GM12878 (cell line): ENCODE measurements at regions of chr1 and their contacts with region 1.

Region 1: GRCh38 chr1:67685067-67685557 is at the start of gene GADD45A:
- DNase-seq: peak; percentile 97
- ATAC-seq: peak; percentile 88
- H3K4me3 ChIP-seq: peak within 1 kb of the TSS; percentile 81
- H3K27ac ChIP-seq: peak within 1 kb of the TSS; percentile 83
- H3K4me1 ChIP-seq: peaks cover 8% of the 10 kb centered on the region
- H3K27me3 ChIP-seq: peaks cover 0 to 2% of the 10 kb centered on the region in 2 experiments; a peak in 2 of 4 replicates
- CTCF ChIP-seq: no peak
- EP300 ChIP-seq: 0 out of 4 replicates have a peak, but pooled peaks of 1 of the 2 experiments have one; percentile 36
- POLR2A ChIP-seq: peak; percentile 100
- RAD21 ChIP-seq: no peak
- polyA plus RNA-seq, gene GADD45A: 4.7 to 9.3 TPM

Region 2: GRCh38 chr1:67430352-67431155 is 254.6 kb before region 1 on chr1 and contains the start of gene SERBP1:
- CTCF ChIA-PET with region 1: no interaction called
- POLR2A ChIA-PET with region 1: interaction called, 5 read pairs
- RAD21 ChIA-PET with region 1: no interaction called
- SMC1A ChIA-PET with region 1: no interaction called
- in situ Hi-C with region 1: no loop called
- intact Hi-C with region 1: loop called (anchors 5 kb)
- DNase-seq: peak; percentile 98
- ATAC-seq: peak; percentile 86
- H3K4me3 ChIP-seq: peak within 1 kb of the TSS; percentile 91
- H3K27ac ChIP-seq: peak within 1 kb of the TSS; percentile 96
- H3K4me1 ChIP-seq: peaks cover 15% of the 10 kb centered on the region
- H3K27me3 ChIP-seq: no peaks in the 10 kb centered on the region
- CTCF ChIP-seq: no peak
- EP300 ChIP-seq: peak in 1 of 2 experiments; percentile 50; a peak in 2 of 4 replicates
- POLR2A ChIP-seq: peak; percentile 59
- RAD21 ChIP-seq: no peak
- polyA plus RNA-seq, gene SERBP1: 76.7 to 111 TPM

Region 3: GRCh38 chr1:67561704-67562113 is 123.4 kb before region 1 on chr1:
- CTCF ChIA-PET with region 1: interaction called, 44 read pairs
- POLR2A ChIA-PET with region 1: interaction called, 5 read pairs
- RAD21 ChIA-PET with region 1: interaction called, 18 read pairs
- SMC1A ChIA-PET with region 1: interaction called, 18 read pairs
- in situ Hi-C with region 1: no loop called
- intact Hi-C with region 1: loop called (anchors 1 kb)
- DNase-seq: peak; percentile 24
- ATAC-seq: peak; percentile 94
- H3K4me3 ChIP-seq: no peak overlapping the region
- H3K27ac ChIP-seq: no peak overlapping the region
- H3K4me1 ChIP-seq: no peaks in the 10 kb centered on the region; the same call in 1 of the 2 replicates
- H3K27me3 ChIP-seq: no peaks in the 10 kb centered on the region
- CTCF ChIP-seq: peak; percentile 82 to 88 (median 88)
- EP300 ChIP-seq: no peak
- POLR2A ChIP-seq: no peak
- RAD21 ChIP-seq: peak; percentile 93

Region 4: DNA sequence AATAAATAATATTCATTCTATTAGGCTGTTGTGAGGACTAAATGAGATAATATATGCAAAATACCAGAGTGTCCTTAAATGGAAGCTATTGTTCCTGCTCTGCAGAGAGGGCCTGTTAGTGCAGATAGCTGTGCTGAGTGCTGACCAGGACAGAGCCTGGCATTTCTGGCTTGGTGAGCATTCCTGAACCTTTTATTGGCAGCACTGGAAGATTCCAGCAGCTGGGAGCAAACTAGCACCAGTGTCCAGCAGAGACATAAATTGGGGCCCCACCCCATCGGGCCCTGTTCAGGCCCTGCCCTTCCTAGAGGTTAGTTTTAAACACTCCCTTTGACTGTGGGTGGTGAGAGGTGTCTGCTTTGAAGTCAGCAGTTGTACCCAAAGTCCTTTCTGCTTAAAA is 86.0 kb before region 1 on chr1:
- CTCF ChIA-PET with region 1: no interaction called
- POLR2A ChIA-PET with region 1: no interaction called
- RAD21 ChIA-PET with region 1: no interaction called
- SMC1A ChIA-PET with region 1: no interaction called
- in situ Hi-C with region 1: no loop called
- intact Hi-C with region 1: no loop called
- DNase-seq: no peak
- ATAC-seq: no peak
- H3K4me3 ChIP-seq: no peak overlapping the region
- H3K27ac ChIP-seq: no peak overlapping the region
- H3K4me1 ChIP-seq: no peaks in the 10 kb centered on the region
- H3K27me3 ChIP-seq: no peaks in the 10 kb centered on the region
- CTCF ChIP-seq: no peak
- EP300 ChIP-seq: no peak
- POLR2A ChIP-seq: no peak
- RAD21 ChIP-seq: no peak

Region 5: GRCh38 chr1:67674260-67675011 is 10.7 kb before region 1 on chr1:
- CTCF ChIA-PET with region 1: interaction called, 8 read pairs
- POLR2A ChIA-PET with region 1: interaction called, 11 read pairs
- RAD21 ChIA-PET with region 1: interaction called, 15 read pairs
- SMC1A ChIA-PET with region 1: interaction called, 17 read pairs
- in situ Hi-C with region 1: no loop called
- intact Hi-C with region 1: no loop called
- DNase-seq: no peak
- ATAC-seq: peak; percentile 84
- H3K4me3 ChIP-seq: no peak overlapping the region
- H3K27ac ChIP-seq: no peak overlapping the region
- H3K4me1 ChIP-seq: no peaks in the 10 kb centered on the region
- H3K27me3 ChIP-seq: no peaks in the 10 kb centered on the region
- CTCF ChIP-seq: no peak
- EP300 ChIP-seq: no peak
- POLR2A ChIP-seq: no peak
- RAD21 ChIP-seq: no peak

Region 6: DNA sequence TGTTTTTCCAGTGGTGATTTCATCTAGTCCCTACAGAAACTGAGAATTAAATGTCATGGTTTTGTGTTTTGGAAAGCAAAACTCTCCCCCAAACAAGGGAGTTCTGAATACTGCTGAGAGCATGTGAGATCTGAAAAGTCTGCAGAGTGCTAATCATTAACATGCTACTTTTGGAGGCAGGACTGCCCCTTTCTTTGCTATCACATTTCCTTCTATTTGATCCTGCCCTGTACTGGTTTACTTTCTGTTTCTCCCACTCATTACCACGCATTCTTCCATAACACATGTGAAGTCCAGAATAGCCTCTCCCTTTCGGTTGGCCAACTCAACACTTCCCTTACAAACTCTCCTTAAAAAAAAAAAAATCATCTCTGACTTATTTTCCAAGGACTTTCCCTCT is 63.5 kb after region 1 on chr1:
- CTCF ChIA-PET with region 1: interaction called, 5 read pairs
- POLR2A ChIA-PET with region 1: interaction called, 30 read pairs
- RAD21 ChIA-PET with region 1: interaction called, 225 read pairs
- SMC1A ChIA-PET with region 1: interaction called, 197 read pairs
- in situ Hi-C with region 1: no loop called
- intact Hi-C with region 1: no loop called
- DNase-seq: peak; percentile 47
- ATAC-seq: peak; percentile 88
- H3K4me3 ChIP-seq: 0 out of 2 replicates have a peak overlapping the region, but pooled peaks have one; percentile 0
- H3K27ac ChIP-seq: no peak overlapping the region
- H3K4me1 ChIP-seq: peaks cover 12% of the 10 kb centered on the region
- H3K27me3 ChIP-seq: no peaks in the 10 kb centered on the region
- CTCF ChIP-seq: no peak
- EP300 ChIP-seq: no peak
- POLR2A ChIP-seq: no peak
- RAD21 ChIP-seq: no peak